Dorsolateral prefrontal cortex (tissue), 120 donors: ENCODE measurements at regions of chr12 and their contacts with region 1.

Region 1: DNA sequence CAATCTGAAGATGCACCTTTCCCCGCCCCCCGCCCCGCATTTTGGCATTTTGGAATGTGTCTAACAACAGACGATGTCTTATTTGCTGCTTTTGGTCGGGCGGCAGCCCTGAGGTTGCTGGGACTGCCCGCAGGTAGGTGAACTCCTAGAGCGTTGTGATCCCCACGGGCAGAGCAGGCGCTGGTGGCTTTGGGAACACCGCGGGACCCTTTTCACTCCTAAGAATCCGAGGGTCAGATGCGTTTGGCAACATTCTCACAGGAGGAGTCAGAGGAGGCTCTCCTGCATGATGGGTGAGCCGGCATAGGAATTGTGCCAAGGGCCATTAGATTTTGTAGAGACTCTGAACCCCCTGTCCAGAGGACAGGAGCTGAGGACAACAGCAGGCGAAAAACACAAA is 41.9 kb downstream of the HCAR2 start:
- DNase-seq: no peak
- H3K4me3 ChIP-seq: no peak overlapping the region
- H3K27ac ChIP-seq: no peak overlapping the region
- H3K27me3 ChIP-seq: no peaks in the 10 kb centered on the region
- CTCF ChIP-seq: no peak

Region 2: DNA sequence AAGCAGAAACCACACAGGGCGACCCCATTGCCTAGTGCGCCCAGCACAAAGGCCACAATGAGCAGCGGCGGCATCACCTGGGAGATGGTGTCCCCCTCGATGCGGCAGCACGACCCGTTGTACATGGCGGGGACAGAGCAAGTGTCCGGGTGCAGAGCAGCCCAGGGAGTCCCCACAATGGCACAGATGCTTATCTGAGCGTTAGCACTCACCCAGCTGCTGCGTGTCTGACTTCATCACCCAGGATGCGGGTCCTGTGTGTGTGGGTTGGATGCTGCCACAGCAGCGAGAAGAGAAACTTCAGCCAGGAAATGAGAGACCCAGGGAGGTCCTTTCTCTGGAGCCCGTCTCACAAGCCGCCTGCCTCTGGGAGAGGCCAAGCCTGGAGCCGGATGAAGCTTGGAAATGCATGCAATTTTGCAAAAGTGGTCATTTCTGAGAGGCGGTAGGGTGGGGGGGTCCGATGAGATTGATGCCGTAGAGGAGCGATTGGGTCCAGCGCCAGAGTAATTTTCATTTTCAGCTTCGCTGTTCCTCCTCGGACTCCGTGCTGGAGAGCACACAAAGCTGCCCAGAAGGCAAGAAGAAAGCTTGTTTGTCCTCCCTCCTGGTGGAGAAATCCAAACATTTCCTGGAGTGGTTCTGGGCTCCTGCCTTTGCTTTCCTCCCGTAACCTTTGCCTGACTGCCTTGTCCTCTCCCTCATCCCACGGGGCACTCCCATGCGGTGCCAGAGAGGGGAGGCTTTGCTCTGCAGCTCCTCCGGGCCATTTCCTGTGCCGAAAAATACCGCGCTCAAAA is 69.2 kb after region 1 on chr12 and contains the start of gene HCAR1:
- intact Hi-C with region 1: loop called in 1 of 2 experiments (anchors 2 kb)
- DNase-seq: no peak
- H3K4me3 ChIP-seq: peak within 1 kb of the TSS in 56 of 59 donors; percentile 4 to 63 (median 44)
- H3K27ac ChIP-seq: peak within 1 kb of the TSS in 3 of 59 donors; percentile 10 to 29 (median 28)
- H3K27me3 ChIP-seq: no peaks in the 10 kb centered on the region
- CTCF ChIP-seq: no peak
- total RNA-seq, gene HCAR1: 0.07 to 1.1 (median 0.28) TPM in 101 of 120 experiments, not detected in the others

Region 3: DNA sequence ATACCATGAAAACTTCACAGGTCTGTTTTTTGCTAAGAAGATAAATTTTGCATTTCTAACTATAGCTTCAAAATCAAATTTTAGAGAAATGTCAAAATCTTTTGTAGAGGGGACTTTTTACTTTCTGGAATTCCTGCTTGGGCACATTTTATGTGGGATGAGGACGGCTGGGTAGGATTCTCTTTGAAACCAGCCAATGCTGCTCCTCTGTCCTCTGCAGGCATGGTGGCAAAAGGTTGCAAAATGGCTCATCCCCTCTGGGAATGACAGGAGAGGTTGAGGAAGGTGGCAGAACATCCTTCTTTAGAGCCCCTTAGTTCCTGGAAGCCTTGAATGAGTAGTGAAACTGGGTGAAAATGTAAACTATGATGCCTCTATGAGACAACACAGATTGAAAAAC is 106.4 kb after region 1 on chr12:
- intact Hi-C with region 1: no loop called
- DNase-seq: no peak
- H3K4me3 ChIP-seq: no peak overlapping the region
- H3K27ac ChIP-seq: peak overlapping the region in 8 of 59 donors; percentile 5 to 48 (median 22)
- H3K27me3 ChIP-seq: no peaks in the 10 kb centered on the region
- CTCF ChIP-seq: no peak